HEK293 (cell line): ENCODE measurements at regions of chr6 and their contacts with region 1.

Region 1: DNA sequence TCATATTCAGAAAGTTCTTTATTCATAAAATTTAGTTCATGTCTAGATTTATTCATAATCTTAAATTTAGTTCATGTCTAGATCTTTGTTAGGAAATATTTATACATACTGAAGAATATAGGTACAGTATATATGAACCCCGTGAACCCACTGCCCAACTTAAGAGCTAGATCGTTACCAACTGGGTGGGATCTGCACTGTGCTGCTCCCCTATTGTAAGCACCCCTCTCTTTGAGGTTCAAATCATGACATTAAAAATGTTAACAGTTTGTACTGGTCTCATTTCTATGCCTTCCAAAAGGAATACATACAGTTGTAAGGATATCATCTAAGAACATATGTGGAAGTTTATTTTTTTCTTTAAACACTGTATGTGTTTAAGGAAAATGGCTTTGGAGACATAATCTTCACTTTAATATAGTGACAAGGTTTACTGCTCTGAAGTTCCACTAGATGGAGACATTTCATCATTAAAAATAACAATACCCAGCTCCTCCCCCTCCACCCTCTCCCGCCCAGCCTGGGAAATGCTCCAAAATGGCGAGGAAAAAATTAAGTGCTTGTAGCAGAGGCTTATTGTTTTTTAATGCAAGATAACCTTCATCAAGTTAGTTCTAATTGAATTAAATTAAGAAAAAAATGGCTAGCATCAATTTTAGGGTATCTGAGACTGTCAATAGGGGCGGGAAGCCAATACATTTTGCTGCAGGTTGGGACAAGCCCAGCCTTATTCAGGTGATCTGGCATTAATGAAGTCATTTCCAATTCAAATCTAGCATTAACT is 104.1 kb upstream of the TRAF3IP2 start:
- H3K4me3 ChIP-seq: no peak overlapping the region
- H3K27ac ChIP-seq: no peak overlapping the region
- H3K4me1 ChIP-seq: peaks cover 10% of the 10 kb centered on the region
- CTCF ChIP-seq: peak; percentile 49

Region 2: DNA sequence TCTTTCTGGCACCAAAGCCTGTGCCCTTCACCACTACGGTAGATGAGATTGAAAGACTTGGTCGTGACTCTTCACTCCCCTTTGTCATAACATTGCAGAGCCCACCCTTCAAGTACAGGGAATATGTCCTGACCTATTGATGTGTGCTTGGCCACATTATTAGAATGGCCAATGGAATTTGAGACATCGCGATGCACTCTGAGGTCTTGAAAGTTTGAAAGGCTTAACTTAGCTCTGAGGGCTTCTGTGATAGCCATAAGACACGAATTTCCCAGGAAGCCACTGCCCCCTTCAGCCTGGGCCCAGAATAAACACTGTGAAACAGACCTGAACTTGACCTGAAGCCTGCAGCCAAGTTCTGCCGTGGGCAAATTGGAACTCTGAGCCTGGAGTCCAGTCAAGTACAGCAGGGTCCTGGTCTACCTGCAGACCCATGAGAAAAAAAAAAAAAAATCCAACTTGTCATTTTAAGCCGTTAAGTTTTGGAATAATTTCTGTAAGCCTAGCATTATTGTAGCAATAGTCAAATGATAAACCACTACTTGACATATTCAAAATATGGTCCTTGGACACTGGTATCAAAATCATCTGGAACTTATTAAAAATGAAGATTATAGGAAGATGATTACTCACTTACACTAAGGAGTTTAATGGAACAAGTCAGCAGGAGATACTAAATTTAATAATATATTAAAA is 67.2 kb before region 1 on chr6:
- CTCF ChIA-PET with region 1: no interaction called
- POLR2A ChIA-PET with region 1: no interaction called
- H3K4me3 ChIP-seq: no peak overlapping the region
- H3K27ac ChIP-seq: no peak overlapping the region
- H3K4me1 ChIP-seq: no peaks in the 10 kb centered on the region
- CTCF ChIP-seq: peak; percentile 58

Region 3: GRCh38 chr6:111753573-111753972 is 43.8 kb after region 1 on chr6:
- CTCF ChIA-PET with region 1: interaction called, 10 read pairs
- POLR2A ChIA-PET with region 1: no interaction called
- H3K4me3 ChIP-seq: no peak overlapping the region
- H3K27ac ChIP-seq: no peak overlapping the region
- H3K4me1 ChIP-seq: no peaks in the 10 kb centered on the region
- CTCF ChIP-seq: no peak

Region 4: DNA sequence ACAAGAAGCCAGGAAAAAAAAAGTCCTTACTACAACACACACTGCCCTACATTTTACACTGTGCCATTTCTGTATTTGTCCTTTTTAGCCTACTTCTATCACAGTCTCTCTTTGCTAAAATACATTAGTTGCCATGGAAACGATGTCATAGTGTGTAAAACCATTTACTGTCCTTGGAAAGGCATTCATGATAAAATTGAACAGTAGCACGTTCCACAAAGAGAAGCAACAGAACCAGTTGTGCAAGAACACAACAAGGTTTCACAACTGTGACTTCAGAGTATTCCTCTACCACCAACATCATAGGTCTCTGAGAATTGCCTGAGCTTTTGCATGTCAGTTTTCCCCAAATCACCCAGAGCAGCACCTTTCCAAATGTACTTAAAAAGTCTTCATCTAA is 142.9 kb after region 1 on chr6:
- CTCF ChIA-PET with region 1: no interaction called
- POLR2A ChIA-PET with region 1: no interaction called
- H3K4me3 ChIP-seq: no peak overlapping the region
- H3K27ac ChIP-seq: no peak overlapping the region
- H3K4me1 ChIP-seq: peaks cover 15% of the 10 kb centered on the region
- CTCF ChIP-seq: no peak

Region 5: GRCh38 chr6:112010328-112010727 is 300.5 kb after region 1 on chr6:
- CTCF ChIA-PET with region 1: interaction called, 13 read pairs
- POLR2A ChIA-PET with region 1: no interaction called
- H3K4me3 ChIP-seq: no peak overlapping the region
- H3K27ac ChIP-seq: no peak overlapping the region
- H3K4me1 ChIP-seq: peaks cover 5% of the 10 kb centered on the region
- CTCF ChIP-seq: peak; percentile 33

Region 6: GRCh38 chr6:112043032-112044007 is 333.5 kb after region 1 on chr6:
- CTCF ChIA-PET with region 1: interaction called, 139 read pairs
- POLR2A ChIA-PET with region 1: interaction called, 7 read pairs
- H3K4me3 ChIP-seq: peak overlapping the region; percentile 66
- H3K27ac ChIP-seq: peak overlapping the region; percentile 27; the same call in 1 of the 2 replicates
- H3K4me1 ChIP-seq: no peaks in the 10 kb centered on the region
- CTCF ChIP-seq: peak; percentile 86